ENCODE measurements at regions of chr12 and their contacts with region 1.

Region 1: GRCh38 chr12:110888256-110888991 is 32.0 kb downstream of the MYL2 start:
- DNase-seq: no peak
- H3K4me3 Mint-ChIP-seq: no peak overlapping the region
- H3K27ac Mint-ChIP-seq: no peak overlapping the region
- H3K4me1 Mint-ChIP-seq: peaks cover 8% of the 10 kb centered on the region
- H3K27me3 Mint-ChIP-seq: no peaks in the 10 kb centered on the region

Region 2: DNA sequence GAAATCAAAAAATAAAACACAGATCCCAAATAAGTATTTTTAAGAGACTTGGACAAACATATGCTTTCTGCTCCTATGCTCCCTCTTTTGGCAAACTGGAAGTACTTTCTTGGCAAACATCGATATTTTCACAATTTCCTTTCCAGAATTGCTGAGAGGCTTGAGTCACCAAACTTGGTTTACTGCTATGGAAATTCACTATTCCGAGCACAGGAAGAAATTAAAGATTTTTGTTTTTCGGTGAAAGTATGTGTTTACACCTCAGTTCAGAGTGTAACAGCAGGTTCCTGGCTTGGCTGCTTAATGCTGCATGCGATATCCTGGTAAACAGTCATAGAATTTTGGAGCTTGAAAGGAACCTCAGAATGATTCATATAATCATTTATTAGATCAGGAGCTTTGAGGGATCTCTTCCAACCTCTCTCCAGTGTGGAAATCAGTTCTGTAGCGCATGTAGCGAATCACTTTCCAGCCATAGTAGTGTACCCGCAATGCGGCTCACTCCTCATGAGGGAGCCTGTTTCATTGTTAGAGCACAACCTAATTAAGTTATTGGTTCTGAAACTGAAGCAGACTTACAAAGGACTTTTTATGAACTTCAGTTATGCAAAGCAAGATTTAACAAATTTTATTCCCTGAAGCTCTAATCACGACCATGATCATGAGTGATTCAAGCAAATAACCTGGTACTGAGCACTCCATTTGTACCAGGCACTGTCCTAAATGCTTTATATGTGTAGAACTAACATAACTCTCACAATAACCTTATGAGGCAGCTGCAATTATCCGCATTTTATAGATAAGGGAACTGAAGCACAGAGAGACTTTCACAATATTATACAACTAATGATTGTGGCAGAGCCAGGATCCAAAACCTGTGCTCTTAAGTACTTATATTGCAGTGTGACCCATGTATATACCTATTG is 663.8 kb before region 1 on chr12:
- CTCF ChIA-PET with region 1: no interaction called
- intact Hi-C with region 1: no loop called
- DNase-seq: no peak
- H3K4me3 Mint-ChIP-seq: no peak overlapping the region
- H3K27ac Mint-ChIP-seq: no peak overlapping the region
- H3K4me1 Mint-ChIP-seq: no peaks in the 10 kb centered on the region
- H3K27me3 Mint-ChIP-seq: peaks cover 4% of the 10 kb centered on the region

Region 3: DNA sequence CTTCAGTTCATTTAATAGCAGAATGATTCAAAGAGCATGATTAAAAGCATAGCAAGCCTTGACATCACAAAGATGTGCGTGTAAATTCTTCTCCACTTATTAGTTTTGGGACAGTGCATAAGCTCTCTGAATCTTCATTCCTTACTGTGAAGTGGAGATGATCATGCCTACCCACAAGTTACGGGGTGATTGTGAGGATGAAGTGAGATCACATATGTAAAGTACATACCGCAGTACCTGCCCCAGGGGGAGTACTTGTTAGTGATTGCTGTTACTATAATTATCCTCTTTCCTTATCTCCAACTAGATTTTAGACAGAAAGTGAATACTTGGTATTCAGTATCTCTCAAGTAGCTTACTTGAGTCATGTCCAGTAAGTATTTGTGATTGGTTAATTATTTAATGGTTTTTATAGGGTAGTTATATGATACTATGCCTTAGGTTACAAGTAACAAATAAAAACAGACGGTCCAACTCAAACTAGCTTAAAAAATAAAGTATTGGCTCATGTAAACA is 380.3 kb before region 1 on chr12:
- CTCF ChIA-PET with region 1: interaction called, 5 read pairs
- intact Hi-C with region 1: loop called (anchors 1 kb)
- DNase-seq: no peak
- H3K4me3 Mint-ChIP-seq: no peak overlapping the region
- H3K27ac Mint-ChIP-seq: no peak overlapping the region
- H3K4me1 Mint-ChIP-seq: no peaks in the 10 kb centered on the region
- H3K27me3 Mint-ChIP-seq: no peaks in the 10 kb centered on the region

Region 4: GRCh38 chr12:110698171-110698902 is 190.1 kb before region 1 on chr12:
- CTCF ChIA-PET with region 1: interaction called, 3 read pairs
- intact Hi-C with region 1: loop called (anchors 2 kb)
- DNase-seq: peak; percentile 90
- H3K4me3 Mint-ChIP-seq: no peak overlapping the region
- H3K27ac Mint-ChIP-seq: peak overlapping the region; percentile 57
- H3K4me1 Mint-ChIP-seq: peaks cover 17% of the 10 kb centered on the region
- H3K27me3 Mint-ChIP-seq: no peaks in the 10 kb centered on the region

Region 5: DNA sequence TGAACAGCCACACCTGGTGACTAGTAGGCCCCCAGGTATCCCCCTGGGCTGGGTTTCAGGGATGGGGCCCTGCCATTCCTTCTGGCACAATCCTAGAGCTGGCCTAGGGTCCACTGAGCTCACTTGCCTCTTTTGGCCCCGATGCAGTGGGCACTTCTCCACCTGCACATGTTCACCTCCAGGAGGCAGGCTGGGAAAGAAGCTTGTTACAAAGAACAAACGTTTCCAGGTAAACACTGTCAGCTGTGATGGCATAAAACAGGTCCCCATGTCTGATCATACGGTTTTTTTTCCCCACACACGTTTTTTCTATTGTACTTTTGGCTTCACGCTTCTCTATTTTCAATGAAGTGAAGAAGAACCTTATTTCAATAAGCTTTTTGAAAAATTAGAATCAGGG is 183.7 kb before region 1 on chr12:
- CTCF ChIA-PET with region 1: interaction called, 10 read pairs
- intact Hi-C with region 1: loop called (anchors 1 kb)
- DNase-seq: peak; percentile 58
- H3K4me3 Mint-ChIP-seq: no peak overlapping the region
- H3K27ac Mint-ChIP-seq: no peak overlapping the region
- H3K4me1 Mint-ChIP-seq: peaks cover 3% of the 10 kb centered on the region
- H3K27me3 Mint-ChIP-seq: no peaks in the 10 kb centered on the region

Region 6: DNA sequence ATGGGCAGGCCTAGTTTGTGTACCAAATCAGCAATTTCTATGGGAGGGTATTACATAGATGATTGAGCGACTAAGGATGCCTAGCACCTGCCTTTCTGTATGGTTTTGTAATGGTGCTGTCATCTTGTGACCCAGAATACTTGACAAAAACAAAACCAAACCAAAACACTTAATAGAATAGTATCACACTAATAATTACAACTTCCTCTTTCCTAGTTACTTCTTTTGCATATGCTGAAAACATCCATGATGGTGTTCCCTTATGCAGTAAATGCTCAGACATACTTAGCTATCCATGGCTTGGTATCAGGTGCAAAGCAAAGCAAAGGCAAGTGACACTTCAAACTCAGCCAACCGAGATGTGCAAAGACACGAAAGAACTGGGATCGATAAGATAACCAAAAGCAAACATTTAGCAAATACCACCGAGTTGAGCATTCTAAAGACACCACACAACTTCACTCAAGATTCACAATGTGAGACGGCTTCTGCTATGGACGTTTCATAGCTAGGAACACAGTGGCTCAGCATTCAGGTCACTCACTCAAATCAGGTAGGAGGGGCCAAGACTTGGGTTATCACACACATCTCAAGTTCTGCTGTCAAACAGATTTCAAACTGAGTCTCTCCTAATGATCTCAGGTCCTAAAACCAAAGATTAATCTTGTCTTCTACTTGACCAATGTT is 170.1 kb before region 1 on chr12:
- CTCF ChIA-PET with region 1: no interaction called
- intact Hi-C with region 1: loop called (anchors 5 kb)
- DNase-seq: no peak
- H3K4me3 Mint-ChIP-seq: no peak overlapping the region
- H3K27ac Mint-ChIP-seq: no peak overlapping the region
- H3K4me1 Mint-ChIP-seq: peaks cover 23% of the 10 kb centered on the region
- H3K27me3 Mint-ChIP-seq: no peaks in the 10 kb centered on the region

Region 7: DNA sequence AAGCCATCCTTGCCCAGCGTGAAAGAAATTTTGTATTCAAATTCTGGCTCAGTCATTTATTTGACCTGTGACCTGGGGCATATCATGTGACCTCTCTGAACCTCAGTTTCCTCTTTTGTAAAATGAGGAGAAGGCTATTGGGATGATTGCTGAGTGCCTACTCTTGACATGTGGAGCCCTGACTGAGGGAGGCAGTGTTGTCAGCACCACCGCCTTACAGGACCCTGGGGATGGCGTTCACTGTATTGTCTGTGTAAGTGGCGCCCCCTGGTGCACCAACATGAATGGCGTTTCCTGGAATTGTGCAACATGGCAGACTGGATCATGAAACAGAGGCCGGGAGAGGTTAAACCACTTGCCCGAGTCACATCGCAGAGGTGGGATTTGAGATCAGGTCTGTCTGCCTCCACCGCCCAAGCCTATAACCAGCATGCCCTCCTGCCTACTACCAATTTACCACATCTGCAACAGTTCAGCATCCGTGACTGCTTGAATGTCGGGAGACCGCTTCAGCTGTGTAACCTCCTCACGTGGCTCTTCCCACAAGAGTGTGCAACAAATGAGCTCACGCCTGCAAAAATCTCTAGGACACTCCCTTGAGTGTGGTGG is 61.7 kb before region 1 on chr12:
- CTCF ChIA-PET with region 1: interaction called, 19 read pairs
- intact Hi-C with region 1: loop called (anchors 1 kb)
- DNase-seq: peak; percentile 97
- H3K4me3 Mint-ChIP-seq: peak overlapping the region; percentile 7
- H3K27ac Mint-ChIP-seq: peak overlapping the region; percentile 50
- H3K4me1 Mint-ChIP-seq: peaks cover 15% of the 10 kb centered on the region
- H3K27me3 Mint-ChIP-seq: no peaks in the 10 kb centered on the region

Region 8: GRCh38 chr12:110846615-110847566 is 41.5 kb before region 1 on chr12 and contains the start of gene CCDC63:
- CTCF ChIA-PET with region 1: interaction called, 11 read pairs
- intact Hi-C with region 1: no loop called
- DNase-seq: peak; percentile 44
- H3K4me3 Mint-ChIP-seq: peak within 1 kb of the TSS; percentile 58
- H3K27ac Mint-ChIP-seq: no peak within 1 kb of the TSS
- H3K4me1 Mint-ChIP-seq: peaks cover 8% of the 10 kb centered on the region
- H3K27me3 Mint-ChIP-seq: peaks cover 25% of the 10 kb centered on the region
- total RNA-seq, gene CCDC63: not detected

Region 9: DNA sequence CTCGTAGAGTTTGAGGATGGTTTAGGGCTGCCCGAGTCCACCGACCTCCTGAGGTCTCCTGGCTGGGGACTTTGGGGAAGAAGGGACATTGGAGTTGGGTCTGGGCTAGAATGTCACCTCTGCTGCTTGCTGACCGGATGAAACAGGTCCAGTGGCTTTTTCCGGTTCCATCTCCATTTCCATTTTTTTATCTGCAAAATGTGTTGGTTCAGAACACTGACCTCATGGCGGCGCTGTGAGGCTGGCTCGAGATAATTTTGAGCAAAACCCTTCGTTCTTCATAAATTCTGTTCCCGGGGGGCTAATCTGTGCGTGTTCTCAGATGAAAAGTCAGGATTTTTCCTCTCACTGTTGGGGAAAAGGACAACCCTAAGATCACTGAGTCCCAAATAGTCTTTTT is 43.6 kb after region 1 on chr12:
- CTCF ChIA-PET with region 1: no interaction called
- intact Hi-C with region 1: no loop called
- DNase-seq: peak; percentile 42
- H3K4me3 Mint-ChIP-seq: no peak overlapping the region
- H3K27ac Mint-ChIP-seq: no peak overlapping the region
- H3K4me1 Mint-ChIP-seq: peaks cover 2% of the 10 kb centered on the region
- H3K27me3 Mint-ChIP-seq: peaks cover 8% of the 10 kb centered on the region